ENCODE measurements at regions of chr15 and their contacts with region 1.

Region 1: GRCh38 chr15:72117486-72118399 is at the start of gene MYO9A:
- DNase-seq: peak; percentile 100
- ATAC-seq: peak; percentile 74
- H3K4me3 ChIP-seq: peak within 1 kb of the TSS; percentile 72 to 94 (median 86)
- H3K4me3 Mint-ChIP-seq: peak within 1 kb of the TSS; percentile 94
- H3K27ac ChIP-seq: peak within 1 kb of the TSS; percentile 85
- H3K27ac Mint-ChIP-seq: peak within 1 kb of the TSS; percentile 99
- H3K4me1 ChIP-seq: peaks cover 14 to 17% of the 10 kb centered on the region in 2 donors
- H3K4me1 Mint-ChIP-seq: peaks cover 36% of the 10 kb centered on the region
- H3K27me3 ChIP-seq: no peaks in the 10 kb centered on the region
- H3K27me3 Mint-ChIP-seq: no peaks in the 10 kb centered on the region
- CTCF ChIP-seq: no peak
- total RNA-seq, gene MYO9A: 66.1 and 75.5 TPM in 2 replicates

Region 2: GRCh38 chr15:72375847-72376581 is 258.3 kb after region 1 on chr15 and contains the start of gene HEXA:
- CTCF ChIA-PET with region 1: no interaction called
- POLR2A ChIA-PET with region 1: interaction called, 6 read pairs
- intact Hi-C with region 1: loop called (anchors 1 kb)
- DNase-seq: peak; percentile 98
- ATAC-seq: peak; percentile 85
- H3K4me3 ChIP-seq: peak within 1 kb of the TSS; percentile 72 to 92 (median 85)
- H3K4me3 Mint-ChIP-seq: peak within 1 kb of the TSS; percentile 98
- H3K27ac ChIP-seq: peak within 1 kb of the TSS; percentile 85 to 95
- H3K27ac Mint-ChIP-seq: peak within 1 kb of the TSS; percentile 100
- H3K4me1 ChIP-seq: peaks cover 44 to 46% of the 10 kb centered on the region in 2 donors
- H3K4me1 Mint-ChIP-seq: peaks cover 54% of the 10 kb centered on the region
- H3K27me3 ChIP-seq: no peaks in the 10 kb centered on the region
- H3K27me3 Mint-ChIP-seq: no peaks in the 10 kb centered on the region
- CTCF ChIP-seq: no peak
- total RNA-seq, gene HEXA: 151 and 154 TPM in 2 replicates

Region 3: DNA sequence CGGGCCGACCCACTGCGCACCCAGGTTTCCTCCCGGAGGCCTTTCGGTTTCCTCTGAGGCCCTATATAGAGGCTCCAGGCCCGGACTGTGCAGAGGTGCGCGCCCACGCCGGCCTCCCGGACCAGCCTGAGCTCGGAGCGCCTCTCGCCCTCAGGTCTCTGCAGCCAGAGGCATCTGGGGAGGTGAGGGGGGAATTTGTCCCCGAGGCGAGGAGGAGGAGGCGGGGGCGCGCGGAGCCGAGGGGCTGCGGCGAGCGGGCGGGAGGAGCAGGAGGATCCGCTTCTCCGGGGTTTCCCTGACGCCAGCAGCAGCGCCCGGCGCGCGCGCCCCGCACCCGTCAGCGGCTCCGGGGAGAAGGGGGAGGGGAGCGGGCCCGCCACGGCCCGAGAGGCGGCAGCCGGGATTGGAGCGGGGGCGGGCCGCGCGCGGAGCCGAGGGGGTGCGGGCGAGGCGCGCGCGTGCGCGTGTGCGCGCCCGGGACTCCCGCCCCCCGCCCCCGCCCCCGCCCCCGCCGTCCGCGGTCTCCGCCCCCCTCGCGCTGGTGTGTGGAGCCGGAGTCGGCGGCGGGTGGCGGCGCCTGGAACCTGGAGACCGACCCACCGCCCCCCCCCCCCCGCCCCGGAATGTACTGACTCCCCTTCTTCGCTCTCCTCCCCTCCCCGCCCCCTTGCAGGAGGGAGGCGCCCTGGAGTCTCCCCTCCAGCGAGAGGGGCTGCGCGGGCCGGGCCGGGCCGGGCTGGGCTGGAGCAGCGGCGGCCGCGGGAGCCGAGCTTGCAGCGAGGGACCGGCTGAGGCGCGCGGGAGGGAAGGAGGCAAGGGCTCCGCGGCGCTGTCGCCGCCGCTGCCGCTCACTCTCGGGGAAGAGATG is 934.3 kb after region 1 on chr15 and contains the start of gene NEO1:
- CTCF ChIA-PET with region 1: no interaction called
- POLR2A ChIA-PET with region 1: no interaction called
- intact Hi-C with region 1: loop called (anchors 5 kb)
- DNase-seq: peak; percentile 84
- ATAC-seq: peak; percentile 76
- H3K4me3 ChIP-seq: peak within 1 kb of the TSS in 4 of 5 experiments; percentile 55 to 78 (median 68)
- H3K4me3 Mint-ChIP-seq: peak within 1 kb of the TSS; percentile 81
- H3K27ac ChIP-seq: no peak within 1 kb of the TSS
- H3K27ac Mint-ChIP-seq: peak within 1 kb of the TSS; percentile 64
- H3K4me1 ChIP-seq: peaks cover 8 to 11% of the 10 kb centered on the region in 2 donors
- H3K4me1 Mint-ChIP-seq: peaks cover 10% of the 10 kb centered on the region
- H3K27me3 ChIP-seq: peaks cover 0 to 32% (median 24%) of the 10 kb centered on the region in 4 experiments
- H3K27me3 Mint-ChIP-seq: peaks cover 37% of the 10 kb centered on the region
- CTCF ChIP-seq: no peak
- total RNA-seq, gene NEO1: 3.9 and 5.6 TPM in 2 replicates